ENCODE measurements at regions of chr10 and their contacts with region 1.

Region 1: GRCh38 chr10:32367793-32368453 is 21.0 kb upstream of the EPC1 start:
- DNase-seq: peak; percentile 81
- ATAC-seq: peak; percentile 50
- H3K4me3 Mint-ChIP-seq: peak overlapping the region; percentile 31
- H3K27ac Mint-ChIP-seq: peak overlapping the region; percentile 39
- H3K4me1 Mint-ChIP-seq: peaks cover 39% of the 10 kb centered on the region
- H3K27me3 Mint-ChIP-seq: no peaks in the 10 kb centered on the region

Region 2: GRCh38 chr10:32357056-32357735 is 10.7 kb before region 1 on chr10:
- CTCF ChIA-PET with region 1: interaction called, 15 read pairs
- POLR2A ChIA-PET with region 1: interaction called, 7 read pairs
- DNase-seq: peak; percentile 63
- ATAC-seq: peak; percentile 78
- H3K4me3 Mint-ChIP-seq: peak overlapping the region; percentile 64
- H3K27ac Mint-ChIP-seq: peak overlapping the region; percentile 94
- H3K4me1 Mint-ChIP-seq: peaks cover 72% of the 10 kb centered on the region
- H3K27me3 Mint-ChIP-seq: no peaks in the 10 kb centered on the region

Region 3: DNA sequence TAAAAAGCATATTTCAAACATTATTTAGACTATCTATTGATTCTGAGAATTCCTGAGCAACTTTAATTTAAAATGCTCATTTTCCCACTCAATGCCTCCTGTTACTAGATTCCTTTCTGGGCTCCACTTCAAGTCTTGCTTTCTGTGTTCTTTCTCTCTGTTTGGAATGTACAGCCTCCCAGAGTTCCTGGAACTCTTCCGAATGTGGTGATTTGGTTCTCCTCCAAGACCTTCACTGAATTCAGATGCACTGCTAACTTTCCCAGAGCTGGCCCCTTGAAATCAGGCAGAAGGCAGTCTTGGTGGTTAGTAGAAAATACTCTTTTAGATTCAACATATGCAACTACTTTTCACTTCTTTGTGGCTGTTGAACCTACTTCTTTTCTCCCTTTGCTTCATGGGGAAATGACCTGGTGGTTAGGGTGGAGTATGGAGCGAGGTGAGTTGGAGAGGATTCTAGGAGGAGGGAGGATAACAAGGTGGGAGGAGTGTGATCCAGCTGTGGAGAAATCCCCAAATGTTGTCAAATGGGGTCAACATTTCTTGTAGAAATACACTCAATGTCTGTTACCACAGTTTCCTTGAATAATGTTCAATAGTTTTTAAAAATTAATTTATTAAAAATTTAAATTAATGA is 50.1 kb after region 1 on chr10:
- CTCF ChIA-PET with region 1: no interaction called
- POLR2A ChIA-PET with region 1: no interaction called
- DNase-seq: no peak
- ATAC-seq: no peak
- H3K4me3 Mint-ChIP-seq: no peak overlapping the region
- H3K27ac Mint-ChIP-seq: no peak overlapping the region
- H3K4me1 Mint-ChIP-seq: peaks cover 4% of the 10 kb centered on the region
- H3K27me3 Mint-ChIP-seq: peaks cover 5% of the 10 kb centered on the region

Region 4: GRCh38 chr10:32489901-32490300 is 122.0 kb after region 1 on chr10:
- CTCF ChIA-PET with region 1: no interaction called
- POLR2A ChIA-PET with region 1: no interaction called
- DNase-seq: no peak
- ATAC-seq: no peak
- H3K4me3 Mint-ChIP-seq: no peak overlapping the region
- H3K27ac Mint-ChIP-seq: no peak overlapping the region
- H3K4me1 Mint-ChIP-seq: no peaks in the 10 kb centered on the region
- H3K27me3 Mint-ChIP-seq: no peaks in the 10 kb centered on the region